ENCODE measurements at regions of chr16 and their contacts with region 1.

Region 1: DNA sequence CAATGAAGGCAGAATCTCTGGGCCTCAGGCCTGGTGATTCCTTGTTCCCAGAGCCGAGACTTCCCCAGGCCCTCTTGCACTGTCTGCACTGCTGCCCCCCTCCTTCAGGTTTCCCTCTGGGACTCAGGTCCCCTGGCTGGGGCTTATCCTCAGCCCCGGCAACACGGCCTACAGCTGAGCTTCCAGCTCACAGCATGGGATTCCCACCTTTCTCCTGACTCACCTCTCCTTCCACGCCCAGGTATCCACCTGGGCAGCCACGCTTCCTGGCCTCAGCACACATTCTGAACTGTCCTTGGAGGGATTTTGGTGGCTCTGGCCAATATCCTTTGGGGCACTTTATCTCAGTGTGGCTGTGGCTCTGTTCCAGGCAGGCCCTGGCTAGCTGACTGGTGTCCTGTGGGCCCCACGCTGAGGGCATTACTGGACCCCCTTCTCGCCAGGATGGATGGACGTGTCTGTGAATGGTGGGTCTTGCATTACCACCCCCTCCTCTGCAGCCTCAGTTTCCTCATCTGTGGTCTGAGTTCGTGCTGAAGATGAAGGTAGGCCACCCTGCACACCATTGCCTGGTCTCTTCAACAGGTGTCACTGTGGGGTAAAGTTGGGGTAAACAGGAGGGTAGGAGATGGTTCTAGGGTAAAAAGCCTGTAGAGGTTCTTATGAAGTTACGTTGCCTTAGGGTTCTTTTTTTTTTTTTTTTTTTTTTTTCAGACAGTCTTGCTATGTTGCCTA is 165.7 kb downstream of the IRF8 start:
- DNase-seq: no peak
- H3K4me3 ChIP-seq: no peak overlapping the region
- H3K27ac ChIP-seq: no peak overlapping the region
- H3K27me3 ChIP-seq: peaks cover 26% of the 10 kb centered on the region
- CTCF ChIP-seq: no peak

Region 2: DNA sequence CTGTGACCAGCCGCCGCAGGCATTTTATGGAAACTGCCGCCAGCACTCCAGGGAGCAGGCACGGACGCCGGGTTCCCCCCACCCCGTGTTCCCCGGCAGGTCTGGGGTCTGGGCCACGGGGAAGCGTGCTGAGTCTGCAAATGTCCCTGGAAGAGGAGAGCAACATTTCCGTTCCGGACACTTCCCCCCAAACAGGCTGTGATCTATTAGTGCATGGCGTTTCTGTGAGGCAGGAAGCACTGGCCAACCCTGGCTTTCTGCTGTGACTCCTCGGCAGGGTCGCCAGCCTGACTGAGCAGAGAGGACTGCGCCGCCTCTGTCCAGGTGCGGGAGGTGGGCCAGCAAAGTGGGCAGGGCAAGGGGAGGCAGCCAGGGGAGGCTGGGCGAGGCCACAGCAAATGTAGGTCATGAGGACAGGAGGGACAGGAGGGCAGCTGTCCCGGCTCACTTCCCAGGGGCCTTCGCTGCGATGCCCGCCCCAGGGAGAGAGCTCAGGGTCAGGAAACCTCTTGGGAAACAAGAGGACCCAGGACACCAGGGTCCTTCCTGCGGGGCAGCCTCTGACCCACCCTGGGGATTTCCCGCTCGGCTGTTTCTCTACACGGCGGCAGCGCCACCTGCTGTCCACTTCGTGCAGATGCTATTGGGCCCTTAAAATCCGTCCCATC is 455.1 kb after region 1 on chr16:
- CTCF ChIA-PET with region 1: interaction called, 3 read pairs
- POLR2A ChIA-PET with region 1: interaction called, 10 read pairs
- DNase-seq: peak; percentile 51
- H3K4me3 ChIP-seq: peak overlapping the region; percentile 42
- H3K27ac ChIP-seq: peak overlapping the region; percentile 47
- H3K27me3 ChIP-seq: no peaks in the 10 kb centered on the region
- CTCF ChIP-seq: peak; percentile 92

Measured in AG04450 (cell line).